Right cardiac atrium (tissue), 5 donors: ENCODE measurements at regions of chr6 and their contacts with region 1.

Region 1: DNA sequence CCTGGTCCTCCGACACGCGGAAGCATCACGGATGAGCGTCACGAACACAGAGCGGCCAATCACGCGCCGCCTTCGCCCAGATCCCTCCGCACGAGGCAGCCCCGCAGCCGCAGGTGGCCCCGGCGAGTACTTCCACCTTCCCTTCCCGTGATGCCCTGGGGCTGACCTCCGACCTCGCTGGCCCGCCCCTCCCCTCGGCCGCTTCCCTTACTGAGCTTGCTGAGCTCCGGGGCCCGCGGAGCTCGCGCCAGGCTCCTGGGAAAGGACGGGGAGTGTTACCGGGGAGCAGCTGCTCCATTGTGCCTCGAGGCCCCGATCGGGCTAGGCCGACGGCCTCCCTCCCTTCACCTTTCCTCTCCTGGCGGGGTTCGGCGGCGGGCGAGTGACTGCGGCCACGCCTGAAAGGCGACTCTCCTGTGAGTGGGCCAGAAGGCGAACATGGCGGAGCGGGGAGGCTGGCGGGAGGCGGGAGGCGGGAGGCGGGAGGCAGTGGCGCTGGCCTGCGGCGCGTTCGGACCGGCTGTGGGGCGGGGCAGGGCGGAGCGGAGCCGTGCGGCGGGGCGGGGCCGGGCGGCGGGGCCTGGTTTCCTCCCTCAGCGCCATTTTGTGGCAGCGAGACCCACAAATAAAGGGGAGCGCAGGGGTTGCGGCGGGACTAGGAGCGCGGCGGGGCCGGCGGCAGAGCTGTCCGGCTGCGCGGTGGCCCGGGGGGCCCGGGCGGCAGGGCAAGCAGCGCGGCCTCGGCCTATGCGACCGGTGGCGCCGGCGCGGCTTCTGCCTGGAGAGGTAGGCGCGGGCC is at the start of gene WTAP:
- DNase-seq: peak; percentile 94 to 98 (median 98)
- ATAC-seq: peak; percentile 97 to 98
- H3K4me3 ChIP-seq: peak within 1 kb of the TSS; percentile 90
- H3K27ac ChIP-seq: peak within 1 kb of the TSS; percentile 99
- H3K4me1 ChIP-seq: peaks cover 4% of the 10 kb centered on the region
- H3K27me3 ChIP-seq: no peaks in the 10 kb centered on the region
- total RNA-seq, gene WTAP: 52.0 to 61.0 (median 56.5) TPM

Region 2: GRCh38 chr6:159789377-159790148 is 62.4 kb after region 1 on chr6 and contains the start of gene TCP1:
- intact Hi-C with region 1: loop called in 1 of 4 experiments (anchors 5 kb)
- DNase-seq: peak; percentile 99 to 100 (median 100)
- ATAC-seq: peak; percentile 95
- H3K4me3 ChIP-seq: peak within 1 kb of the TSS; percentile 87
- H3K27ac ChIP-seq: peak within 1 kb of the TSS; percentile 97
- H3K4me1 ChIP-seq: peaks cover 8% of the 10 kb centered on the region
- H3K27me3 ChIP-seq: no peaks in the 10 kb centered on the region
- total RNA-seq, gene TCP1: 134 to 161 (median 145) TPM